T-cell (primary cell): ENCODE measurements at regions of chr21 and their contacts with region 1.

Region 1: GRCh38 chr21:44078411-44078981 is 28.7 kb upstream of the PWP2 start:
- DNase-seq: peak in 1 of 35 experiments; percentile 49
- ATAC-seq: peak in 2 of 4 experiments; percentile 28 to 41
- H3K4me3 ChIP-seq: no peak overlapping the region
- H3K4me3 Mint-ChIP-seq: peak overlapping the region in 1 of 3 donors; percentile 55
- H3K27ac ChIP-seq: peak overlapping the region; percentile 44
- H3K27ac Mint-ChIP-seq: peak overlapping the region; percentile 72 to 88
- H3K4me1 ChIP-seq: peaks cover 21 to 54% of the 10 kb centered on the region in 2 experiments
- H3K4me1 Mint-ChIP-seq: peaks cover 61 to 69% (median 62%) of the 10 kb centered on the region in 3 donors
- H3K27me3 ChIP-seq: no peaks in the 10 kb centered on the region
- H3K27me3 Mint-ChIP-seq: no peaks in the 10 kb centered on the region

Region 2: DNA sequence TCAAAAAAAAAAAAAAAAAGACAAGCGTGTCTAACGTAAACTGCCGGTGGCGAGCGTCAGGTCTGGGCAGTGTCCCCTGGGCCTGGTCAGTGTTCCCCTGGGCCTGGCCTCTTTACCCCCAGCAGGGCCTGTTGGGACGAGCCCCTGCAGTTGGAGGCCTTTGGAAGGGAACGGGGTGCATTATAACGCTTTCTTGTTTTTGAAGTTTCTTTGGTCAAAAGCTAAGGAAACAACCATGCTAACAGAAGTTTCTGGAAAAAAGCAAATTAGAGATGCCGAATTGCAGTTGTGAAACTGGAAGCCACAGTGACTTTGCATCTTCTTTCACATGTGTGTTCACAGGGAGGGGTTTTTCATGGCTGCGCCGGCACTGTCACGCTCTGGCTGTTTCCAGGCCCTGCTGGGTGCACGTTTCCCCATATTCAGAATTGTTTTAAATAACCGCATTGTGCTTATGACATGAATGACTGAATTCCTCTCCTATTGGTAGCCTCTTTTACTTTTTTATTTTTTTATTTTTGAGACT is 273.2 kb before region 1 on chr21:
- CTCF ChIA-PET with region 1: no interaction called
- POLR2A ChIA-PET with region 1: no interaction called
- DNase-seq: peak in 1 of 35 experiments; percentile 51
- ATAC-seq: no peak
- H3K4me3 ChIP-seq: no peak overlapping the region
- H3K4me3 Mint-ChIP-seq: no peak overlapping the region
- H3K27ac ChIP-seq: no peak overlapping the region
- H3K27ac Mint-ChIP-seq: peak overlapping the region in 1 of 2 donors; percentile 57
- H3K4me1 ChIP-seq: peaks cover 0 to under 1% of the 10 kb centered on the region in 2 experiments
- H3K4me1 Mint-ChIP-seq: peaks cover 0 to 5% (median 0%) of the 10 kb centered on the region in 3 donors
- H3K27me3 ChIP-seq: no peaks in the 10 kb centered on the region
- H3K27me3 Mint-ChIP-seq: no peaks in the 10 kb centered on the region

Region 3: GRCh38 chr21:44011980-44012527 is 66.4 kb before region 1 on chr21 and contains the start of gene TRAPPC10:
- CTCF ChIA-PET with region 1: no interaction called
- POLR2A ChIA-PET with region 1: interaction called, 5 to 22 read pairs
- DNase-seq: peak; percentile 29 to 88 (median 64)
- ATAC-seq: peak; percentile 72 to 79 (median 77)
- H3K4me3 ChIP-seq: peak within 1 kb of the TSS; percentile 74 to 91
- H3K4me3 Mint-ChIP-seq: peak within 1 kb of the TSS; percentile 92 to 96 (median 92)
- H3K27ac ChIP-seq: peak within 1 kb of the TSS; percentile 81
- H3K27ac Mint-ChIP-seq: peak within 1 kb of the TSS; percentile 94 to 96
- H3K4me1 ChIP-seq: peaks cover 10 to 34% of the 10 kb centered on the region in 2 experiments
- H3K4me1 Mint-ChIP-seq: peaks cover 46 to 54% (median 49%) of the 10 kb centered on the region in 3 donors
- H3K27me3 ChIP-seq: no peaks in the 10 kb centered on the region
- H3K27me3 Mint-ChIP-seq: no peaks in the 10 kb centered on the region
- total RNA-seq, gene TRAPPC10: 82.5 to 144 (median 92.2) TPM

Region 4: GRCh38 chr21:44035244-44035643 is 43.3 kb before region 1 on chr21:
- CTCF ChIA-PET with region 1: interaction called in 1 of 2 experiments, 11 read pairs
- POLR2A ChIA-PET with region 1: interaction called in 1 of 2 experiments, 5 read pairs
- DNase-seq: no peak
- ATAC-seq: no peak
- H3K4me3 ChIP-seq: no peak overlapping the region
- H3K4me3 Mint-ChIP-seq: no peak overlapping the region
- H3K27ac ChIP-seq: no peak overlapping the region
- H3K27ac Mint-ChIP-seq: no peak overlapping the region
- H3K4me1 ChIP-seq: peaks cover 0 to 6% of the 10 kb centered on the region in 2 experiments
- H3K4me1 Mint-ChIP-seq: peaks cover 13 to 28% (median 23%) of the 10 kb centered on the region in 3 donors
- H3K27me3 ChIP-seq: no peaks in the 10 kb centered on the region
- H3K27me3 Mint-ChIP-seq: no peaks in the 10 kb centered on the region

Region 5: DNA sequence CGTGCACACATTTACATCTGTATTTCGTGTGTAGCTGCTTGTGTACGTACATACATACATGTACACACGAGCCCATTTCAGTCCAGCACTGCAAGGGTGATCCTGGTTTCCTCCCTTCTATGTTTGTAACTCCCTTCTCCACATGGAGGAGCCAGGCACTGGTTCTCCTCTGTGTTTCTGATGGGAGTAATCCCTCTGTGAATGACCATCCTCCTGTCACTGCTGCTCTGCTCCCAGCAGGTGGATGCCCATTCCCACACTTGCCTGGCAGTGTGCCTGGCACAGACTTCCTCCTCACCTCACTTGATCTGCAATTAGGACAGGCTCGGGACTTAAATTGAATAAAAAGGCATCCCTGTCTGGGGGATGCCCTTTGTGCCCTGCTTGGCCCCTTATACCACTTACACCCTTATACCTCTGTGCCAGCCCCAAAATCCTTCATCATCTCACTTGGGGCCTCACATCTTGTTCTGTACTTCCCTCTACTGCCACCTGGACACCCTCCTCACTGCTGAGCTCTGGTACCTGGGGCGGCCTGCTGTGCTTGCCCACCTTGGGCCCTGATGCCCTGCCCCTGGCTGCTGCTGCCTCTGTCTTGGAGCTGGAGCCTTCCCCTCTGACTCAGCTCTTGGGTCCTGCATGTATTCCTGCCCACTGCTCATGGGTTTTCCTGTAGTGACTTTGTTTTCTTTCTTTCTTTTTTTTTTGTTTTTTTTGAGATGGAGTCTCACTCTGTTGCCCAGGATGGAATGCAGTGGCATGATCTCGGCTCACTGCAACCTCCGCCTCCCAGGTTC is 29.1 kb before region 1 on chr21:
- CTCF ChIA-PET with region 1: no interaction called
- POLR2A ChIA-PET with region 1: interaction called, 4 to 11 read pairs
- DNase-seq: no peak
- ATAC-seq: no peak
- H3K4me3 ChIP-seq: no peak overlapping the region
- H3K4me3 Mint-ChIP-seq: no peak overlapping the region
- H3K27ac ChIP-seq: no peak overlapping the region
- H3K27ac Mint-ChIP-seq: peak overlapping the region; percentile 66 to 72
- H3K4me1 ChIP-seq: peaks cover 0 to 13% of the 10 kb centered on the region in 2 experiments
- H3K4me1 Mint-ChIP-seq: peaks cover 20 to 25% (median 24%) of the 10 kb centered on the region in 3 donors
- H3K27me3 ChIP-seq: no peaks in the 10 kb centered on the region
- H3K27me3 Mint-ChIP-seq: no peaks in the 10 kb centered on the region

Region 6: GRCh38 chr21:44353191-44353970 is 274.9 kb after region 1 on chr21 and contains the start of gene TRPM2:
- CTCF ChIA-PET with region 1: no interaction called
- POLR2A ChIA-PET with region 1: no interaction called
- DNase-seq: peak in 22 of 35 experiments; percentile 12 to 55 (median 24)
- ATAC-seq: peak; percentile 85 to 90 (median 89)
- H3K4me3 ChIP-seq: peak within 1 kb of the TSS; percentile 29 to 49
- H3K4me3 Mint-ChIP-seq: peak within 1 kb of the TSS; percentile 72 to 84 (median 79)
- H3K27ac ChIP-seq: peak within 1 kb of the TSS; percentile 34
- H3K27ac Mint-ChIP-seq: peak within 1 kb of the TSS; percentile 79 to 81
- H3K4me1 ChIP-seq: peaks cover 37 to 51% of the 10 kb centered on the region in 2 experiments
- H3K4me1 Mint-ChIP-seq: peaks cover 46 to 51% (median 50%) of the 10 kb centered on the region in 3 donors
- H3K27me3 ChIP-seq: peaks cover 0 to 38% of the 10 kb centered on the region in 2 experiments
- H3K27me3 Mint-ChIP-seq: peaks cover 0 to 19% of the 10 kb centered on the region in 2 donors
- total RNA-seq, gene TRPM2: 1.2 to 8.6 (median 3.6) TPM

Region 7: GRCh38 chr21:44785620-44786335 is 707.3 kb after region 1 on chr21:
- CTCF ChIA-PET with region 1: no interaction called
- POLR2A ChIA-PET with region 1: interaction called in 1 of 2 experiments, 11 read pairs
- DNase-seq: no peak
- ATAC-seq: no peak
- H3K4me3 ChIP-seq: no peak overlapping the region
- H3K4me3 Mint-ChIP-seq: no peak overlapping the region
- H3K27ac ChIP-seq: no peak overlapping the region
- H3K27ac Mint-ChIP-seq: no peak overlapping the region
- H3K4me1 ChIP-seq: peaks cover 0 to 3% of the 10 kb centered on the region in 2 experiments
- H3K4me1 Mint-ChIP-seq: peaks cover 24 to 39% (median 38%) of the 10 kb centered on the region in 3 donors
- H3K27me3 ChIP-seq: no peaks in the 10 kb centered on the region
- H3K27me3 Mint-ChIP-seq: no peaks in the 10 kb centered on the region